ENCODE measurements at regions of chr12 and their contacts with region 1.

Region 1: DNA sequence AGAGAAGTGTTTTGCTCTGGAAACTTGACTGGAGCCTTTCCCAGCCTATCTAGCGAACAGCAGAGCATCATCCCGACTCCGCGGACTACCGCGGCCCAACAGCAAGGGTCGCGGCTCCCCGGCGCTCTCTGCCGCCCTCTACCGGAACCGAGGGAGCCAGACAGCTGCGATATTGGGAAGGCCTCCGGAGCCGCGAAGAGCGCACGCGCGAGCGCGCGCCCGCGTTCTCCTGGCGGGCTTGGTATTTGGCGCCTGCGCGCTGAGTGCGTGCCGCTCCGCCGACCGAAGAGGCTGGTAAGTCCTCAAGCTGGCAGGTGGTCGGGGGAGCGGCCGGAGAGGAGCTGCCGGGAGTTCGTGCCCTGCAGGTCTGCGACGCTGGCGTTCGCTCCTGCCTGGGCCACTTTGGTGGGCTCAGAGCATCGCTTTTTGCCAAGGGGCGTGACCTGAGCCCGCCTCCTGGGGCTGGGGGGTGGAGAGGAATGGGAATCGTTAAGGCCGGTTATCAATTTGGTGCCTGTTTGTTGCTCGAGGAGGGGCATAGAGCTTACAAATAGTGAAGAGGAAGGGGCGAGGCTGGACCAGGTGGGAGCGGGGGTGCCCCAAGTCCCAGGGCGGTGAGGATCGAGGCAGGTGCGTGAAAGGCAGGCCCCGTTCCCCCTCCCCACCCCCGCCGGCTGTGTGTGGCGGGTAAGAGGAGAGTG is at the start of gene TMEM106C:
- DNase-seq: peak; percentile 89
- H3K4me3 Mint-ChIP-seq: peak within 1 kb of the TSS; percentile 95
- H3K27ac Mint-ChIP-seq: peak within 1 kb of the TSS; percentile 81
- H3K4me1 Mint-ChIP-seq: peaks cover 30% of the 10 kb centered on the region
- H3K27me3 Mint-ChIP-seq: peaks cover 27% of the 10 kb centered on the region
- total RNA-seq, gene TMEM106C: 168 and 169 TPM in 2 replicates

Region 2: DNA sequence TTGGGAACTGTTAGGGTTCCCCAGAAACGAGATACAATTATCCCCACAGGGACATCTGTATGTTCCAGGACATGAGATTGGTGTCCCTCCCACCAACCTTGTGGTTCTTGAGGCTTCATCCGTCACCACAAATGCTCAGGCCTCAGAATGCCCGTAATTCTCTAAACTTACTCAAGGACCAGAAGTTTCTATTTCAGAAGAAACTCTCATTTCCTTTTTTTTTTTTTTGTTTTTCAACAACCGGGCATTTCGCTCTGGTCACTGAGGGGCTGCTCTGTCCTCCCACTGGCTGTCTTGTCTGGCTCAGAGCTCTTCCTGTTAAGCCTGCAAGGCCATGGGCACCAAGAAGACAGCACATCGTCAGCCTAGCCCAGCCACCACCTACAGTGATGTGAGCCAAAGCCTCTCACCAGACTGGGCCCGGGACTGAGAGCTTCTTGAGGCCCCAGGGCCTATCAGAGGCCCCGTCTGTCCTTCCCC is 94.9 kb before region 1 on chr12:
- intact Hi-C with region 1: loop called (anchors 1 kb)
- DNase-seq: no peak
- H3K4me3 Mint-ChIP-seq: peak overlapping the region; percentile 37
- H3K27ac Mint-ChIP-seq: peak overlapping the region; percentile 96
- H3K4me1 Mint-ChIP-seq: peaks cover 78% of the 10 kb centered on the region
- H3K27me3 Mint-ChIP-seq: no peaks in the 10 kb centered on the region

Region 3: GRCh38 chr12:48165094-48165981 is 201.8 kb after region 1 on chr12:
- intact Hi-C with region 1: loop called (anchors 2 kb)
- DNase-seq: no peak
- H3K4me3 Mint-ChIP-seq: no peak overlapping the region
- H3K27ac Mint-ChIP-seq: no peak overlapping the region
- H3K4me1 Mint-ChIP-seq: peaks cover 2% of the 10 kb centered on the region
- H3K27me3 Mint-ChIP-seq: peaks cover 16% of the 10 kb centered on the region